Activated T-helper 1 cell treated with anti-CD3 and anti-CD28 coated beads, Interleukin-12 subunit alpha, Interleukin-12 subunit beta, Interleukin-2, Interleukin-4 antibody, amounts not matched to agents 30 ng/mL and 10 ng/mL and 1 ng/mL, durations not matched to agents 14 hours and 24 hours and 36 hours (primary cell): ENCODE measurements at regions of chr10 and their contacts with region 1.

Region 1: DNA sequence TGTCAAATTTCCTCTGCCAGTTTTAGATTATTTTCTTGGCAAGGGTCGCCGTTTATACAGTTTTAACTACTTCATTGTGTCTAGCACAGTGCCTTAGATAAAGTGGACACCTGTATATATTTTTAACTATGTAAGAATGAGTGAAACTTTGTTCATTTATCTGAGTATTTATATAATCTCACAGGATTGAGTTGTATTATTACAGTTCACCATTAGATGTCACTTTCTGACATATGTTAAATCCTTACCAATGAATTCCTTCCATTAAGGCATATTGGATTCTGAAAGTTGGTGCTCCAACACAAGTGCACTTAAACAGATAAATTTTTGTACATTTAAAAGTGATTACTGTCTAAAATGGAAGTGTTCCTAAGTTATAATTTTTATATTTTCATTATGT is 43.0 kb downstream of the ZMYND11 start:
- DNase-seq: no peak
- H3K4me3 Mint-ChIP-seq: no peak overlapping the region
- H3K27ac Mint-ChIP-seq: no peak overlapping the region
- H3K4me1 Mint-ChIP-seq: peaks cover 13% of the 10 kb centered on the region
- H3K27me3 Mint-ChIP-seq: no peaks in the 10 kb centered on the region

Region 2: GRCh38 chr10:135601-136464 is 42.4 kb before region 1 on chr10:
- intact Hi-C with region 1: loop called (anchors 2 kb)
- DNase-seq: peak; percentile 56
- H3K4me3 Mint-ChIP-seq: peak overlapping the region; percentile 90
- H3K27ac Mint-ChIP-seq: peak overlapping the region; percentile 86
- H3K4me1 Mint-ChIP-seq: peaks cover 30% of the 10 kb centered on the region
- H3K27me3 Mint-ChIP-seq: peaks cover 13% of the 10 kb centered on the region

Region 3: GRCh38 chr10:201328-201771 is 23.1 kb after region 1 on chr10:
- intact Hi-C with region 1: no loop called
- DNase-seq: no peak
- H3K4me3 Mint-ChIP-seq: no peak overlapping the region
- H3K27ac Mint-ChIP-seq: no peak overlapping the region
- H3K4me1 Mint-ChIP-seq: peaks cover 3% of the 10 kb centered on the region
- H3K27me3 Mint-ChIP-seq: no peaks in the 10 kb centered on the region

Region 4: GRCh38 chr10:215444-215843 is 37.2 kb after region 1 on chr10:
- intact Hi-C with region 1: no loop called
- DNase-seq: no peak
- H3K4me3 Mint-ChIP-seq: no peak overlapping the region
- H3K27ac Mint-ChIP-seq: no peak overlapping the region
- H3K4me1 Mint-ChIP-seq: peaks cover 2% of the 10 kb centered on the region
- H3K27me3 Mint-ChIP-seq: no peaks in the 10 kb centered on the region

Region 5: GRCh38 chr10:230737-231136 is 52.5 kb after region 1 on chr10:
- intact Hi-C with region 1: loop called (anchors 2 kb)
- DNase-seq: no peak
- H3K4me3 Mint-ChIP-seq: no peak overlapping the region
- H3K27ac Mint-ChIP-seq: no peak overlapping the region
- H3K4me1 Mint-ChIP-seq: peaks cover 9% of the 10 kb centered on the region
- H3K27me3 Mint-ChIP-seq: no peaks in the 10 kb centered on the region

Region 6: GRCh38 chr10:283916-284356 is 105.7 kb after region 1 on chr10:
- intact Hi-C with region 1: loop called (anchors 2 kb)
- DNase-seq: peak; percentile 16
- H3K4me3 Mint-ChIP-seq: peak overlapping the region; percentile 41
- H3K27ac Mint-ChIP-seq: peak overlapping the region; percentile 78
- H3K4me1 Mint-ChIP-seq: peaks cover 29% of the 10 kb centered on the region
- H3K27me3 Mint-ChIP-seq: no peaks in the 10 kb centered on the region

Region 7: DNA sequence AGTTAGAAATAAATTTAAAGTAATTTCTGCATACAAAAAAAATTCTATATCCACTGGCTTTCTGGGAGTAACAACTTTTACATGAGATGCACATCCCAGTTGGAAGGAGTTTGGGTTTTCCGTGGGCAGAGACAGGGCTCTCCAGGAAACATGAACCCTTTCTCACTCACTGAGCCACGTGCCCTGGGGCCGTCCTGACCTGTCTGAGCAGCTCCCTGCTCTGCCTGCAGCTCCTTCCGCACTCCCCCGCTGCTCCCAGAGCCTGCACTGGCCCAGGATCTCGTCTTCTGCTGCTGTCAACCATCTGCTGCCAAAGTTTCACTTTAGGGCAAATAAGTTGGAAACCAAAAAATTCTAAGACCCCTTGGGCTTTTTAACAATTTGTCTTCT is 342.2 kb after region 1 on chr10:
- intact Hi-C with region 1: no loop called
- DNase-seq: no peak
- H3K4me3 Mint-ChIP-seq: no peak overlapping the region
- H3K27ac Mint-ChIP-seq: no peak overlapping the region
- H3K4me1 Mint-ChIP-seq: no peaks in the 10 kb centered on the region
- H3K27me3 Mint-ChIP-seq: peaks cover 7% of the 10 kb centered on the region